ENCODE measurements at regions of chr14 and their contacts with region 1.

Region 1: DNA sequence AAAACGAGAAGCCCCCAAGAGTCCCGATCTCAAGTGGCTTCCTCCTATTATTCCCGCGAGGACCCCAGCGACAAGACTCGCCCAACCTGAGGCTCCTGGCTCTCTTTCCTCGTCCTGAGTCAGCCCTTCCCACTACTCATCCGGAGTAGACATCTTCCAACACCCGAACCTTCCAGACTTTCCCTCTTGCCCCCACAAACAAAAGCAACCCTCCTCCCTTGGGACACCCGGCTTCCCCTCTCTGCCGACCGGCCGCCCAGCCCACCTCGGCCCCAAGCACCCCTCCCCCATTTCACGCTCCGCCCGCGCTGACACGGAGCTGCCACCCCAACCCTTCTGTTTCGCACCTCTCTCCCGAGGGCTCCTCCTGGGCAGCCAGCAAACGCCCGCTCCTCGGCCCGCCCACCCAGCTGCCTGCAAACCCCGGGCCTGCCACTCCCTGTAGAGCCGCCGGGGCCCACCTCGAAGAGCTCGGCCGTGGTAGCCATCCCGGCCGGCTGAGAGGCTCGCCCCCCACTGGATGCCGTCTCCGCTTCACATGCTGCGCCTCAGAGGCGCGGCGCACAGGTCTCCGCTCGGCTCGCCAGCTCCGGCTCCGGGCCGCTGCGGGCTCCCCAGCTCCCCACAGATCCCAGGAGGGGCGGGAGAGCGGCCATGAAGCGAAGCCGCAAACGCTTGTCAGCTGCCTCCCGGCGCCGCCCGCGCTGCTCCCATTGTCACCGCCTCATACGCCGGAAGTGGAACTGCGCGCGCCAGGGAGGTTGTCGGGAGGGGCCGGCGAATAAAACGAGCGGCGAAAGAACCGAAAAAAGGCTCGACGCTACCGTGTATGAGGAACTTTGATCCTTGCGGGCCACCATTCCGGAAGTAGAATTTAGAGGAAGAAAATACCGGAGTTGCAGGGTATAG is at the starts of genes AP5M1 and EXOC5:
- DNase-seq: peak; percentile 89
- ATAC-seq: peak; percentile 91
- H3K4me3 ChIP-seq: peak within 1 kb of the TSS; percentile 91
- H3K27ac ChIP-seq: peak within 1 kb of the TSS; percentile 72
- H3K4me1 ChIP-seq: 0 out of 2 replicates have a peak, but pooled peaks cover 2% of the 10 kb centered on the region
- H3K27me3 ChIP-seq: no peaks in the 10 kb centered on the region
- CTCF ChIP-seq: no peak
- POLR2A ChIP-seq: peak; percentile 72; the same call in 1 of the 2 replicates
- RAD21 ChIP-seq: no peak
- total RNA-seq, gene AP5M1: 28.3 TPM in 2 replicates
- total RNA-seq, gene EXOC5: 52.5 and 89.7 TPM in 2 replicates

Region 2: DNA sequence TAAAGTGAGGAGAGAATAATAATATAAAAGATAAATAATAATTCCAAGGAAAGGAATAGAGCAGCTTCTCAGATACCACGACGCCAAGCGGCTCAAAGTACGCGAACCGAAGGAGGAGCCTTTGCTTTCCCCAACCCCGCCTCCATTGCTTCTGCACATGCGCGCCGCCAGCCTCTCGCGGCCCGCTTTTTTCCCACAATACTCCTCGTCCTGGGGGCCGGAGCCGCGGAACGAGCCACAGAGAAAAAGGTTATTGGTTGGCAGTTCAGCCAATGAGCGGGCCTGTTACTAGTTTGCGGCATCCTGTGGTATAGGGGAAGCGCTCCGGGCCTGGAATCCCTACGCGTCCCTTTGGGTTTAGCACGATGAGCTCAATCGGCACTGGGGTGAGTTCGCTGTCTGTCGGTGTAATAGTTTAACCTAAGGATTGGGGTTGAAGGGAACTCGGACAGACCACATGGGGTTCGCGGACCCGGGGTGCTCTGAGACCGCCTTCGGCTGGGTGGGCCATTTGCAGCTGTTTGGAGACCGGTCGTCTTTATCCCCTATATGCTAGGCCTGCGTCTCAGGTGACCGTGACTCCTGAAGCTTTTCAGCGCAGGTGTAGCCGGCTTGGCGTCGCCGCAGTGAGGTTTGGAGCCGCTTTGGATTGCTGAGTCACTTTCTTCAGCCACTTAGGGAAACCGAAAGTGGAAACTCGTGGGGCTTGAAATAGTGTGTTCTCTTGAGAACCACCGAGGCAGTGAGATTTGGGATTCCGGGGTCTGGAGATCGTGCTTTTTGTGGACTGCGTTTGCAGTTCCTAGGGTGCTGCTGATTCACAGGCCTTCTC is 976.4 kb after region 1 on chr14 and contains the start of gene PSMA3:
- CTCF ChIA-PET with region 1: no interaction called
- POLR2A ChIA-PET with region 1: no interaction called
- dilution Hi-C with region 1: no loop called
- in situ Hi-C with region 1: loop called (anchors 25 kb)
- intact Hi-C with region 1: no loop called
- DNase-seq: peak; percentile 95
- ATAC-seq: peak; percentile 95
- H3K4me3 ChIP-seq: peak within 1 kb of the TSS; percentile 80
- H3K27ac ChIP-seq: peak within 1 kb of the TSS; percentile 93
- H3K4me1 ChIP-seq: no peaks in the 10 kb centered on the region
- H3K27me3 ChIP-seq: no peaks in the 10 kb centered on the region
- CTCF ChIP-seq: no peak
- POLR2A ChIP-seq: peak; percentile 95
- RAD21 ChIP-seq: no peak
- total RNA-seq, gene PSMA3: 74.9 and 114 TPM in 2 replicates

Measured in IMR-90 (cell line).